Left colon (tissue), 2 donors: ENCODE measurements at regions of chr1 and their contacts with region 1.

Region 1: GRCh38 chr1:91282695-91283420 is 121.8 kb downstream of the HFM1 start:
- DNase-seq: peak in 1 of 2 donors; percentile 42
- ATAC-seq: peak; percentile 54

Region 2: DNA sequence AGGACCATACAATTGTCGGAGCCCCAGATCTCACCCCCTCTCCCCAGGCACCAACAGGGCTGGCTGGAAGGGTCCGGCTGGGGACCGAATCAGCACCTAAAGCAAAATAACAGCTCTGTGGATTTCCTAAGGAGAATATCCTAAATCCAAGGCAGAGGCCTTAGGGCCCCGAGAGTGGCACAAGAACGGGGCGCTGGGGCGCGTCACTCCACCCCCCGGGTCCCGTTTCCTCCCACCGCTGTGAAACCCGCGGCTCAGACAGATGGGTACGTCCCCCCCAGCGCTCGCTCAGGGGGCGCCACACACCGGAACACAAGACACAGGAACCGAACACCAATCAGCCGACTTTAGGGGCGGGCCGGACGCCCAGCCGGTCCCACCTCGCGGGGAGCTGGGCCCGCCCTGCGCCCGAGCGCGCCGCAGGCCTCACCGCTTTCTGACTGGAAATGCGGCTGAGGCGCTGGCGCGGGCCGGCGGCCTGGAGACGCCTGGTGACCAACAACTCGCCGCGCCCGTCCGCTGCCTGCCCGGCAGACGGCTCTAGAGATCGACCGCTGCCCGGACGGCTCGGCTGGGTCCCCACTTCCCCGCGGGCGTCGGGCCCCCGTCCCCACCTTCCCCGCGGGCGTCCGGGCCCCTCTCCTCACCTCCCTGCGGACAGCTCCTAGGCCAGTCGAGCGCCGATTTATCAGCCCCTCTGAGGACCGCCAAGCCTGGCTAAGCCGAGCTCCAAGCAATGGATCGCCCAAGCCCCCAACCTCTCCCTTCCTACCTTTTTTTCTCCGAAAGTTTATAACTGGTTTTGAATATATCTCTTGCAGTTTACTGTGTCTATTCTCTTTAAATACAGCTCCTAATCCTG is 121.5 kb after region 1 on chr1 and contains the start of gene HFM1:
- intact Hi-C with region 1: loop called in 1 of 2 experiments (anchors 5 kb)
- DNase-seq: peak; percentile 49 to 56
- ATAC-seq: peak; percentile 82
- total RNA-seq, gene HFM1: 0.09 to 0.47 TPM

Region 3: GRCh38 chr1:91924146-91924545 is 641.3 kb after region 1 on chr1:
- intact Hi-C with region 1: loop called (anchors 10 kb)
- DNase-seq: no peak
- ATAC-seq: no peak